Endothelial cell of umbilical vein (primary cell): ENCODE measurements at regions of chr7 and their contacts with region 1.

Region 1: GRCh38 chr7:22214000-22214399 is 143.0 kb downstream of the RAPGEF5 start:
- DNase-seq: peak; percentile 88
- H3K4me3 ChIP-seq: peak overlapping the region in 1 of 3 experiments; percentile 1
- H3K27ac ChIP-seq: peak overlapping the region; percentile 80
- H3K4me1 ChIP-seq: peaks cover 75% of the 10 kb centered on the region
- H3K27me3 ChIP-seq: no peaks in the 10 kb centered on the region
- CTCF ChIP-seq: no peak
- POLR2A ChIP-seq: no peak

Region 2: GRCh38 chr7:22121702-22122474 is 92.1 kb before region 1 on chr7:
- CTCF ChIA-PET with region 1: no interaction called
- POLR2A ChIA-PET with region 1: no interaction called
- dilution Hi-C with region 1: no loop called
- intact Hi-C with region 1: loop called (anchors 1 kb)
- DNase-seq: peak; percentile 96
- H3K4me3 ChIP-seq: no peak overlapping the region
- H3K27ac ChIP-seq: peak overlapping the region; percentile 87
- H3K4me1 ChIP-seq: peaks cover 50% of the 10 kb centered on the region
- H3K27me3 ChIP-seq: no peaks in the 10 kb centered on the region
- CTCF ChIP-seq: no peak
- POLR2A ChIP-seq: peak; percentile 29

Region 3: DNA sequence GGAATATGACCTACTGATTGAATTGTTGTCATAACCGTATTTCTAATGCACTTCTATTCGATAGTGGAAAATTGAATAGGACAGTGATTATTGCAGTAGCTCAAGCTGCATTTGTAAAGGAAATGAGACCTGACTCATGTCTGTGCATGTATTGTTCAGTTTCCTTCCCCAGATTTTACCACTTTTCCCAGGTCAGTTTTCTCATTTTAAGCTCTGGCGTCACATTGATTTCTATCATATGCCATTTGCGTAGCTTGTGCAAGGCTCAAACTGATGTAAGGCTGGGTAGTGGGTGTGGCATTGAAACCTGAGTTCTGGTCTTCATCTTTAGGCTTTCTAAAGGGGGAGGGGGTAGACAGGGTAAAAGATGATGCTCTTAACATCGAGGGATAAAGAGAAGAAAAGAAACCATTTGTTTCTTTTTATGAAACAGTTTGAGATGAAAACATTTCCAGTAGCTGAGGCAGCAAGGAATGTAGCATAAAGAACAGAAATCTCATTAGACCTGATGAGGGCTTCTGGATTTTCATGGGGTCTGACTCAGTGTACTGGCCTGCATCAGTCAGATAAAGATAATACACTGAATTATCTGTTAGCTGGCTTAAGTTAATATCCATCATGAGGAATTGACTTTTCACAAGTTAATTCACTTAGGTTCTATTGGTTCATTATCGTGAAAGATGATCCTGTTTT is 86.0 kb before region 1 on chr7:
- CTCF ChIA-PET with region 1: no interaction called
- POLR2A ChIA-PET with region 1: no interaction called
- dilution Hi-C with region 1: no loop called
- intact Hi-C with region 1: loop called (anchors 1 kb)
- DNase-seq: peak; percentile 97
- H3K4me3 ChIP-seq: no peak overlapping the region
- H3K27ac ChIP-seq: peak overlapping the region; percentile 91
- H3K4me1 ChIP-seq: peaks cover 55% of the 10 kb centered on the region
- H3K27me3 ChIP-seq: no peaks in the 10 kb centered on the region
- CTCF ChIP-seq: no peak
- POLR2A ChIP-seq: no peak

Region 4: GRCh38 chr7:22156205-22156604 is 57.8 kb before region 1 on chr7:
- CTCF ChIA-PET with region 1: no interaction called
- POLR2A ChIA-PET with region 1: no interaction called
- dilution Hi-C with region 1: no loop called
- intact Hi-C with region 1: loop called (anchors 2 kb)
- DNase-seq: peak; percentile 74
- H3K4me3 ChIP-seq: no peak overlapping the region
- H3K27ac ChIP-seq: peak overlapping the region; percentile 3
- H3K4me1 ChIP-seq: peaks cover 9% of the 10 kb centered on the region
- H3K27me3 ChIP-seq: no peaks in the 10 kb centered on the region
- CTCF ChIP-seq: no peak
- POLR2A ChIP-seq: no peak

Region 5: GRCh38 chr7:22356701-22357353 is 142.8 kb after region 1 on chr7 and contains the start of gene RAPGEF5:
- CTCF ChIA-PET with region 1: no interaction called
- POLR2A ChIA-PET with region 1: no interaction called
- dilution Hi-C with region 1: no loop called
- intact Hi-C with region 1: loop called (anchors 2 kb)
- DNase-seq: no peak
- H3K4me3 ChIP-seq: peak within 1 kb of the TSS in 2 of 3 experiments; percentile 26 to 52
- H3K27ac ChIP-seq: no peak within 1 kb of the TSS
- H3K4me1 ChIP-seq: peaks cover 3% of the 10 kb centered on the region
- H3K27me3 ChIP-seq: no peaks in the 10 kb centered on the region
- CTCF ChIP-seq: no peak
- POLR2A ChIP-seq: no peak
- total RNA-seq, gene RAPGEF5: 43.2 and 43.3 TPM in 2 replicates